Posterior cingulate gyrus (tissue), 11 donors: ENCODE measurements at regions of chr4 and their contacts with region 1.

Region 1: GRCh38 chr4:5050520-5051277 is 581 bp upstream of the STK32B start:
- DNase-seq: peak; percentile 63 to 97 (median 84)

Region 2: GRCh38 chr4:5378002-5378401 is 327.3 kb after region 1 on chr4:
- intact Hi-C with region 1: loop called (anchors 10 kb)
- DNase-seq: no peak

Region 3: GRCh38 chr4:5460116-5460801 is 409.6 kb after region 1 on chr4:
- intact Hi-C with region 1: loop called (anchors 5 kb)
- DNase-seq: peak in 6 of 10 donors; percentile 22 to 84 (median 28)

Region 4: GRCh38 chr4:5524446-5525299 is 474.0 kb after region 1 on chr4:
- intact Hi-C with region 1: no loop called
- DNase-seq: no peak

Region 5: DNA sequence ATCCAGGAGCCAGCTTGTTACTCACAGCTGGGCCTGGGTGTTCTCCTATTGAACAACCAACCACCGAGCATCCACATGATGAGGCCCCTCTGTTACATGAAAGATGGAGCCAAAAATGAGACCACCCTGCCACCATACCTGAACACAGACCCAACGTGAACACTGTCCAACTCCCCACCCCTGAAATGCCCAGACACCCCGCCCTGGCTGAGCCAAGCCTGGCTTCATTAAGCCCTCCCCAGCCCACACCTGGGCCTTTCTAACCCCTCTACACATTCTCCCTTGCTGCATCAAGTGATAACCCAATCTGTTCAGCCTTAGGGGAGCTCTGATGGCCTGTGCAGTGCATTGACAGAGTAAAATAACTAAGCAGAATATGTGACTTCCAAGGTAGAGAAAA is 741.0 kb after region 1 on chr4:
- intact Hi-C with region 1: loop called (anchors 1 kb)
- DNase-seq: no peak

Region 6: GRCh38 chr4:5812506-5813229 is 762.0 kb after region 1 on chr4:
- intact Hi-C with region 1: loop called (anchors 1 kb)
- DNase-seq: peak in 1 of 10 donors; percentile 17